CD8-positive, alpha-beta T cell (primary cell): ENCODE measurements at regions of chr3 and their contacts with region 1.

Region 1: GRCh38 chr3:67901681-67902080 is 247.3 kb upstream of the SUCLG2 start:
- DNase-seq: peak in 3 of 9 experiments; percentile 7 to 45 (median 31)
- ATAC-seq: no peak
- H3K4me3 ChIP-seq: no peak overlapping the region
- H3K4me3 Mint-ChIP-seq: no peak overlapping the region
- H3K27ac ChIP-seq: no peak overlapping the region
- H3K27ac Mint-ChIP-seq: no peak overlapping the region
- H3K4me1 ChIP-seq: peaks cover 10% of the 10 kb centered on the region
- H3K4me1 Mint-ChIP-seq: peaks cover 14% of the 10 kb centered on the region
- H3K27me3 ChIP-seq: no peaks in the 10 kb centered on the region
- H3K27me3 Mint-ChIP-seq: no peaks in the 10 kb centered on the region
- CTCF ChIP-seq: peak; percentile 42

Region 2: DNA sequence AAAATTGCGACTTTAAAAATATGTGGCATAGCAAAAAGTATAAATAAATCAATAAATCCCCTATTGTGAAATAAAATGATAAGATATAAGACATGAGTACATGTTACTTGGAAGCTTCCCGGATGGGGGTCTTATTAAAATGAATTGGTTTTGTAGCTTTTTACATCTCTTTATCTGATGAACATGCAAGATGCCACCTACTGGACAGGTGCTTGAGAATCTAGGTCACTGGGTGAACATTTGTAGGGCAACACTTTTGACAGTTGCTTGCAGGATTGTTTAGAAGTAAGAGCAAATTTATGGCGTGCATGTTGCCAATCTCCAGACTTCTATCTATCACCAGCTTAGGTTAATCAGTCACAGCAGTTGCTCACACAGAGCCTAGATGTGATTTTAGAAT is 115.4 kb after region 1 on chr3:
- CTCF ChIA-PET with region 1: no interaction called
- POLR2A ChIA-PET with region 1: no interaction called
- intact Hi-C with region 1: loop called in 1 of 2 experiments (anchors 5 kb)
- DNase-seq: peak in 2 of 9 experiments; percentile 6 to 17
- ATAC-seq: no peak
- H3K4me3 ChIP-seq: no peak overlapping the region
- H3K4me3 Mint-ChIP-seq: no peak overlapping the region
- H3K27ac ChIP-seq: no peak overlapping the region
- H3K27ac Mint-ChIP-seq: no peak overlapping the region
- H3K4me1 ChIP-seq: no peaks in the 10 kb centered on the region
- H3K4me1 Mint-ChIP-seq: peaks cover 4% of the 10 kb centered on the region
- H3K27me3 ChIP-seq: no peaks in the 10 kb centered on the region
- H3K27me3 Mint-ChIP-seq: no peaks in the 10 kb centered on the region
- CTCF ChIP-seq: no peak